ENCODE measurements at regions of chr12 and their contacts with region 1.

Region 1: GRCh38 chr12:114684098-114684869 is at the start of gene TBX3:
- DNase-seq: peak; percentile 99
- ATAC-seq: peak; percentile 82
- H3K4me3 ChIP-seq: peak within 1 kb of the TSS; percentile 94
- H3K27ac ChIP-seq: peak within 1 kb of the TSS; percentile 95
- H3K4me1 ChIP-seq: peaks cover 15% of the 10 kb centered on the region
- H3K27me3 ChIP-seq: no peaks in the 10 kb centered on the region
- CTCF ChIP-seq: peak; percentile 79
- total RNA-seq, gene TBX3: 89.4 and 123 TPM in 2 replicates

Region 2: DNA sequence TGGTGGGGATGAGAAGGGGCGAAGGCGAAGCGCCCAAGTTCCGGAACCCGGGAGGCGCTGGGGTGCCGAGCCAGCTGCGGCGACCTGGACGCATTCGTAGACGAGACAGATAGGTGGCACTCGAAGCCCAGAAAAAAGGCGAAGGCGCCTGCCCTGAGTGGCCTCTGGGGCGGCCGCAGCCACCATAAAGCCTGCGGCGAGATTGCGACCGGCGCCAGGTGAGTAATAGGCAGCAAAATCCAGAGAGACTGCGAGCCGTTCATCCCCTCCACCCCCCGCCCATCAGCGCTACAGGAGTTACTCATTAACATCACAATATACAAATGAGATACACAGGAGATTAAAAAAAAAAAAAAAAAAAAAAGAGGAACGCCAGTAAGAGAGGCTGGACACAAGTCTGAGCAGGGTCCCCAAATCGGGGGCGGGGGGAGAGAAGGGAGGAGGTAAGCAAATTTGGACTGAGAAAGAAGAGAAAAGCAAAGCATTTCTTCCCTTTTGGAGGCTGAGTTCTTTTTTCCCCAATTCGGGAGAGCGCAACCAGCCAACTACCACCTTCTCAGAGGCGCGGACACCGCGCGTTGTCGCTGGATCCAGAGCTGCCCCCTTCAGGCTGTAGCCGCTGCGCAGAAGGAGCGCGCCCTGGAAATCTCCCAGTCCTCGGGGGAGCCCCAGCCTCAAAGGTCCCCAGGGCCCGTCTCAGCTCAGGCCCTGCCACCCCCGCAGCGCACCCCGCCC is 16.0 kb before region 1 on chr12:
- CTCF ChIA-PET with region 1: interaction called, 28 read pairs
- POLR2A ChIA-PET with region 1: interaction called, 41 read pairs
- intact Hi-C with region 1: loop called (anchors 1 kb)
- DNase-seq: peak; percentile 98
- ATAC-seq: peak; percentile 45
- H3K4me3 ChIP-seq: peak overlapping the region; percentile 94
- H3K27ac ChIP-seq: peak overlapping the region; percentile 89
- H3K4me1 ChIP-seq: peaks cover 77% of the 10 kb centered on the region
- H3K27me3 ChIP-seq: no peaks in the 10 kb centered on the region
- CTCF ChIP-seq: peak; percentile 75

Region 3: DNA sequence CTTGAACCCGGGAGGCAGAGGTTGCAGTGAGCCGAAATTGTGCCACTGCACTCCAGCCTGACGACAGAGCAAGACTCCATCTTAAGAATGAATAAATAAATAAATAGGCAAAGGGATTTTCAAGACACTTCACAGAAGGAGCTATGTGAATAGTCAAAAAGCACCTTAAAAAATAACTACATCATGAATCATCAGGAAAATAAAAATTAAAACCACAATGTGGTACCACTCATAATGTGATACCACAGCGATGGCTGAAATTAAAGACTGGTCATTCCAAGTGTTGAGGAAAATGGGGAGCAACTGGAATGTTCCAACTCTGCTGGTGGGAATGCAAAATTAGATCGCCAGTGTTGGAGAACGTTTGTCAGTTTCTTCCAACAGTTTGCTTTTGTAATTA is 92.8 kb after region 1 on chr12:
- CTCF ChIA-PET with region 1: interaction called, 6 read pairs
- POLR2A ChIA-PET with region 1: interaction called, 22 read pairs
- intact Hi-C with region 1: no loop called
- DNase-seq: peak; percentile 93
- ATAC-seq: peak; percentile 84
- H3K4me3 ChIP-seq: peak overlapping the region; percentile 49; the same call in 1 of the 2 replicates
- H3K27ac ChIP-seq: peak overlapping the region; percentile 87
- H3K4me1 ChIP-seq: peaks cover 20% of the 10 kb centered on the region
- H3K27me3 ChIP-seq: no peaks in the 10 kb centered on the region
- CTCF ChIP-seq: no peak

Region 4: GRCh38 chr12:114913871-114914801 is 229.9 kb after region 1 on chr12:
- CTCF ChIA-PET with region 1: interaction called, 5 read pairs
- POLR2A ChIA-PET with region 1: interaction called, 11 read pairs
- intact Hi-C with region 1: loop called (anchors 1 kb)
- DNase-seq: peak; percentile 94
- ATAC-seq: peak; percentile 50
- H3K4me3 ChIP-seq: no peak overlapping the region; the same call in 1 of the 2 replicates
- H3K27ac ChIP-seq: peak overlapping the region; percentile 57
- H3K4me1 ChIP-seq: peaks cover 67% of the 10 kb centered on the region
- H3K27me3 ChIP-seq: no peaks in the 10 kb centered on the region
- CTCF ChIP-seq: no peak

Region 5: DNA sequence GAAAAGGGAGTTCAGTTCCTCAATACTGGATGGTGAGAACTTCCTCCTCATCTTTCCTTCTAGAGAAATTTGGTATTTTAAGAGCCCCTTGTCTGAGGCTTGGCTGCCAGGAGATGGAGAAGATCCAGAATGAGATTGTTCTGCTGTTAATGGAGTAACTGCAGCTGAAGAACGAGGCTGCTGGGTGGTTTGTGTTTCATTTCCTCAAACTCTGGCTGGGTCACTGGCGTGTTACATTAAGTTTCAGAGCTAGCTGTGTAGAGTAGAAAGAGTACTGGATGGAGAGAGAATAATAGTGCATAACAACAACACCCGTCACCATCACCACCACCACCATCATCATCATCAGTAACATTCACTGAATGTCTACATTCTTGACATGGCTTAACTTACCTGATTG is 324.6 kb after region 1 on chr12:
- CTCF ChIA-PET with region 1: interaction called, 3 read pairs
- POLR2A ChIA-PET with region 1: interaction called, 14 read pairs
- intact Hi-C with region 1: loop called (anchors 1 kb)
- DNase-seq: no peak
- ATAC-seq: no peak
- H3K4me3 ChIP-seq: no peak overlapping the region
- H3K27ac ChIP-seq: no peak overlapping the region
- H3K4me1 ChIP-seq: peaks cover 51% of the 10 kb centered on the region
- H3K27me3 ChIP-seq: no peaks in the 10 kb centered on the region
- CTCF ChIP-seq: no peak

Region 6: DNA sequence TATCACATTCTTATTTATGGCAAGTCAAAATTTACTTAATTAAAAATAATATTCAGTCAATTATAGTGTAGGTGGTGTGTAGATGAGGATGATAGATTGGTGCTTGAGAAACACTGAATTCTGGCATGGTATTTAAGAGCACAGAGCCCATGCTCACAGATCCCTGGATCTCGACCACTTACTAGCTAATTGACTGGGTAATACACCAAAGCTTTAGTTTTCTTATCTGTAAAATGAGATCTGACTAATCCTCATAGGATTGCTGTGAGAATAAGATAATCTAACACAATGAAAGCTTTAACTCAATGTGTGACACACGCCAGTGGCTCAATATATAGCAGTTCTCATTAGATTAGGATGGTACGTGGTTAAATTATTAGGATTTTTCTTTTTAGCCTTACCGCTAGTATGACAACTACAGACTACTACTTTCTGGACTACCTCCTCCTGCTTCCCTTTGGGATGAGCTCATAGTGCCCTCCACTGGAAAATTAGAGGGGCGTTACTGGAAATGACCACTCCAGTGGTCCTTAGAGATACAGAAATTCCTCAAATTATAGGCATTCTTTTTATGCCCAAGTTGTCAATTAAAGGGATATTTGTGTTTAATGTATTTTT is 482.5 kb after region 1 on chr12:
- CTCF ChIA-PET with region 1: interaction called, 4 read pairs
- POLR2A ChIA-PET with region 1: interaction called, 8 read pairs
- intact Hi-C with region 1: loop called (anchors 1 kb)
- DNase-seq: peak; percentile 34
- ATAC-seq: peak; percentile 67
- H3K4me3 ChIP-seq: no peak overlapping the region
- H3K27ac ChIP-seq: no peak overlapping the region
- H3K4me1 ChIP-seq: no peaks in the 10 kb centered on the region
- H3K27me3 ChIP-seq: no peaks in the 10 kb centered on the region
- CTCF ChIP-seq: no peak; the same call in 1 of the 2 replicates